Breast epithelium (tissue), 4 donors: ENCODE measurements at regions of chr15 and their contacts with region 1.

Region 1: GRCh38 chr15:41258706-41259471 is 27.8 kb downstream of the CHP1 start:
- DNase-seq: no peak
- H3K4me3 ChIP-seq: no peak overlapping the region
- H3K27ac ChIP-seq: peak overlapping the region; percentile 46 to 48
- H3K4me1 ChIP-seq: no peaks in the 10 kb centered on the region
- H3K27me3 ChIP-seq: no peaks in the 10 kb centered on the region
- CTCF ChIP-seq: no peak
- POLR2A ChIP-seq: no peak

Region 2: DNA sequence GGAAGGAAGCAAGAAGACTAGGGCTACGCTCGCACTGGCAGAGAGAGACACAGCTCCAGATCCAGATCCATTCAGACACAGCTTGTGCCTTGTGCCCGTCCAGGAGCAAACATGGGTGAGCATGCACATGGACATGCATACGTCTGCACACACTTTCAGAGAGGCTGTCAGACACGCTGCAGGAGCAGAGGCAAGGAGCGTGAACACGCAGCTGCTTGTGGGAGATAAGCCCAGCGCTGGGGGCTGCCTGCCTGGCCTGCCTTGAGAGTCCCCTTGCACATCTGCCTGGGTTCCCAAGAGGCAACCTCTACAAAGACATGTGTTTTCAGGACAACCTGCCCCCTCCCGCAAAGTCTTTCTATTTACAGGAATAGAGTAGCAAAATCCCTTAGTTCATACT is 831.7 kb before region 1 on chr15:
- intact Hi-C with region 1: loop called (anchors 5 kb)
- DNase-seq: no peak
- H3K4me3 ChIP-seq: no peak overlapping the region
- H3K27ac ChIP-seq: no peak overlapping the region
- H3K4me1 ChIP-seq: no peaks in the 10 kb centered on the region
- H3K27me3 ChIP-seq: no peaks in the 10 kb centered on the region
- CTCF ChIP-seq: no peak
- POLR2A ChIP-seq: no peak

Region 3: DNA sequence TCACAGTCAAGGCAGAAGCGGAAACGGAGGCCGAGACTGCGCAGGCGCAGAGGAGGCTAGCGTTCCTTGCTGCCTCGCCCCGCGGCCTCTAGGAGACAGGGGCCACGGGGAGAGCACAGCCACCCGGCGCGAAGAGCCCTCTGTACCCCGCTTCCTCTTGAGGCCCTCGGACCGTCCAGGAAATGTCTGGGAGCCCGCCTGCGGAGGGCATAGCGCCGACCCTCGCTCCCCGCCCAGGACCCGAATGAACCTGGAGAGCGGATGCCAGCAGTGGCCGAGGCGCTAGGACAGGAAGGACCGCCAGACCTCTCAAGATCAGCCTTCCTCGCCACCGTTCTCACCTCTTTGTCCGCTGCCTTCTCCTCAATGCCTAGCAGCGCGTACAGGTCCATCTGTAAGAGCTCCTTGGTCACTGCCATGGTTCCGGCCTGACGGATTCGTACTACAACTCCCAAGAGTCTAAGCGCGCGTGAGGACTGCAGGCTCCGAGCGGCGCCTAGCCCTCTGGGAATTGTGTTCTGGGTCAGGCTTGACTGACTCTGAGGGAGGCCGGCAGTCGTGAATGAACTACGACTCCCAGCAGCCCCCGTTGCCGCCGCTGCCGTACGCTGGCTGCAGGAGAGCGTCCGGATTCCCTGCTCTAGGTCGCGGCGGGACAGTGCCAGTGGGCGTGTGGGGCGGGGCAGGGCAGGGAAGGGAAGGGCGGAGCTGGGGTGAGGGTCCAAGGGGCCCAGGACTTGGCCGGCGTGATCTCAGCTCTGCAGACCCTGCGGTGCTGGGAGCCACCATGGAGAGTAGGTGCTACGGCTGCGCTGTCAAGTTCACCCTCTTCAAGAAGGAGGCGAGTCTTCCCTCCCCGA is 451.6 kb before region 1 on chr15 and contains the starts of genes DNAJC17 and ZFYVE19:
- intact Hi-C with region 1: no loop called
- DNase-seq: peak; percentile 92 to 94
- H3K4me3 ChIP-seq: peak within 1 kb of the TSS; percentile 84 to 95 (median 91)
- H3K27ac ChIP-seq: peak within 1 kb of the TSS; percentile 93 to 97
- H3K4me1 ChIP-seq: peaks cover 0 to 5% of the 10 kb centered on the region in 2 donors
- H3K27me3 ChIP-seq: no peaks in the 10 kb centered on the region
- CTCF ChIP-seq: peak in 1 of 3 donors; percentile 10
- POLR2A ChIP-seq: peak; percentile 11
- total RNA-seq, gene DNAJC17: 18.4 to 55.8 (median 24.3) TPM
- total RNA-seq, gene ZFYVE19: 19.4 to 58.8 (median 44.6) TPM

Region 4: DNA sequence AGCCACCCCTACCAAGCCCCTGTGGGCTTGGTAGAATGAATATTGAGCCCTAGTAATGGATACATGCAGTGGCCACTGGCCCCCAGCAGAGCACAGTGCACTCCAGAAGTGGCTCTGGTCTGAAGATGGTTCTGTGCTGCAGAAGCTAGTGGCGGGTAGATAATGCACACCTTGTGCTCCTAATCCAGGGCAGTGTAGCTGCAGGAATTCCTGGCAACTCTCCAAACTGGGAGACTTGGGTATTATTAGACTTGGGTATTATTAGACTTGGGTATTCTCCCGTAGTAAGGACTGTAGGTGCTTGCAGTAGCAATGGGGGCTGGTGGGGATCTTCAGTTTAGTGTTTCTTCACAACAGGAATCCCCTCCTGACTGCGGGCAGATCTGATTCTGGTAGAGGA is 108.5 kb after region 1 on chr15:
- intact Hi-C with region 1: no loop called
- DNase-seq: no peak
- H3K4me3 ChIP-seq: no peak overlapping the region
- H3K27ac ChIP-seq: no peak overlapping the region
- H3K4me1 ChIP-seq: no peaks in the 10 kb centered on the region
- H3K27me3 ChIP-seq: no peaks in the 10 kb centered on the region
- CTCF ChIP-seq: no peak
- POLR2A ChIP-seq: no peak

Region 5: DNA sequence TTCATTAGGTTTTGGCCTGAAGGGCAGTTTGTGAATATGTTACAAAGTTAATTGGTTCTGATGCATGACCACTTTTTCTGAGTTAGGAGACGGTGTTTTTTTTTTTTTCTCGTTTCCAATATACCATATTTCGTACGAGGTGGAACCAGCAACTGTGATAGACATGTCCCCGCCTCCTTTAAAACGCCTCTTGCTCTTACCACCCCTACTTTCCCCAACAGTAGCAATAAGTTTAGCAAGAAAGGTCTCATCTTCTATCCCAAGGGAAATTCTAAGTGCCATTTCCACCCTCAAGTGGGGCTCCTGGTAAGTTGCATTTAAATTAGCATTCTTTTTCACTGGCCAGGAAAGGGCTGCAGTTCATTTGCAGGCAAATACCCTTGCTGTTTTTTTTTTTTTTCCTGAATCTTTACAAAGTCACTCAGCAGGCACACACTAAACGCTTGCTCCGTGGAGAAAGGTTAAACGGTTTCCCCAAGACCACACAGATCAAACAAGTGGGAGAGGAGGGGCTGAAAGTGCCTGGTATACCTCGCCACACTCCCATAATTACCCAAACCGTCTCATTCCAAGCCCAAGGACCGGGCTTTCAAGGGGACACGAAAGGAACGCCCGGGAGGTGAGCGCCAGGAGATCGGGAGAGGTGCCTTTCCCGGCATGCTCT is 361.8 kb after region 1 on chr15:
- intact Hi-C with region 1: no loop called
- DNase-seq: no peak
- H3K4me3 ChIP-seq: peak overlapping the region; percentile 45 to 86 (median 68)
- H3K27ac ChIP-seq: peak overlapping the region; percentile 96 to 97
- H3K4me1 ChIP-seq: no peaks in the 10 kb centered on the region
- H3K27me3 ChIP-seq: no peaks in the 10 kb centered on the region
- CTCF ChIP-seq: no peak
- POLR2A ChIP-seq: no peak